ENCODE measurements at regions of chr7 and their contacts with region 1.

Region 1: GRCh38 chr7:114865564-114865963 is 56.3 kb upstream of the MDFIC start:
- DNase-seq: peak; percentile 42
- H3K4me3 ChIP-seq: no peak overlapping the region
- H3K27ac ChIP-seq: no peak overlapping the region
- H3K27me3 ChIP-seq: no peaks in the 10 kb centered on the region
- CTCF ChIP-seq: peak; percentile 86

Region 2: GRCh38 chr7:115217373-115217772 is 351.8 kb after region 1 on chr7:
- CTCF ChIA-PET with region 1: interaction called, 31 read pairs
- POLR2A ChIA-PET with region 1: no interaction called
- DNase-seq: no peak
- H3K4me3 ChIP-seq: no peak overlapping the region
- H3K27ac ChIP-seq: no peak overlapping the region
- H3K27me3 ChIP-seq: no peaks in the 10 kb centered on the region
- CTCF ChIP-seq: peak; percentile 31; the same call in 1 of the 2 replicates

Region 3: DNA sequence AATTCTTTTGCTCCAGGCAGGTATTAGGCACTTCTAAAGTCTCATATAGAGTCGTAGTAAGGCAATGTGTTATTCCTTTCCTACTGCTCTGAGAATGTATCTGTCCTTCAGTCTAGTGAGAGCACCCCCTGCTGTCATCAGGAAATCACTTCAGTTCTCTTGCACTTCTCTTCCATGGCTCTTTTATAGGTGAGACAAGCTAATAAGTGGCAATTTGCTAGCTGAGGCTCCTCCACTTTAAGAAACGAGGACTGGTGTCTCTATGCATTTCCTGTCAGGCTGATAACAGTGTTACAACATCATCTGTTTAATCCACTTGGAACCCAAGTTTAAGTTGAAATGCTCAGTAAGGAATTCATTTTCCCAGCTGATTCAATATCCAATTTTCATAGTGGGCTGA is 814.4 kb after region 1 on chr7:
- CTCF ChIA-PET with region 1: interaction called, 20 read pairs
- POLR2A ChIA-PET with region 1: no interaction called
- DNase-seq: no peak
- H3K4me3 ChIP-seq: no peak overlapping the region
- H3K27ac ChIP-seq: no peak overlapping the region
- H3K27me3 ChIP-seq: no peaks in the 10 kb centered on the region
- CTCF ChIP-seq: peak; percentile 61

Measured in AG04450 (cell line).